Ascending aorta (tissue), 2 donors: ENCODE measurements at regions of chr15 and their contacts with region 1.

Region 1: GRCh38 chr15:83653639-83654378 is at the start of gene ADAMTSL3:
- DNase-seq: peak in 1 of 2 donors; percentile 88
- H3K4me3 ChIP-seq: peak within 1 kb of the TSS; percentile 71 to 74
- H3K27ac ChIP-seq: peak within 1 kb of the TSS; percentile 89 to 91
- H3K4me1 ChIP-seq: peaks cover 9 to 28% of the 10 kb centered on the region in 2 donors
- H3K27me3 ChIP-seq: no peaks in the 10 kb centered on the region
- CTCF ChIP-seq: peak in 2 of 3 experiments; percentile 8 to 27
- total RNA-seq, gene ADAMTSL3: 28.1 TPM

Region 2: DNA sequence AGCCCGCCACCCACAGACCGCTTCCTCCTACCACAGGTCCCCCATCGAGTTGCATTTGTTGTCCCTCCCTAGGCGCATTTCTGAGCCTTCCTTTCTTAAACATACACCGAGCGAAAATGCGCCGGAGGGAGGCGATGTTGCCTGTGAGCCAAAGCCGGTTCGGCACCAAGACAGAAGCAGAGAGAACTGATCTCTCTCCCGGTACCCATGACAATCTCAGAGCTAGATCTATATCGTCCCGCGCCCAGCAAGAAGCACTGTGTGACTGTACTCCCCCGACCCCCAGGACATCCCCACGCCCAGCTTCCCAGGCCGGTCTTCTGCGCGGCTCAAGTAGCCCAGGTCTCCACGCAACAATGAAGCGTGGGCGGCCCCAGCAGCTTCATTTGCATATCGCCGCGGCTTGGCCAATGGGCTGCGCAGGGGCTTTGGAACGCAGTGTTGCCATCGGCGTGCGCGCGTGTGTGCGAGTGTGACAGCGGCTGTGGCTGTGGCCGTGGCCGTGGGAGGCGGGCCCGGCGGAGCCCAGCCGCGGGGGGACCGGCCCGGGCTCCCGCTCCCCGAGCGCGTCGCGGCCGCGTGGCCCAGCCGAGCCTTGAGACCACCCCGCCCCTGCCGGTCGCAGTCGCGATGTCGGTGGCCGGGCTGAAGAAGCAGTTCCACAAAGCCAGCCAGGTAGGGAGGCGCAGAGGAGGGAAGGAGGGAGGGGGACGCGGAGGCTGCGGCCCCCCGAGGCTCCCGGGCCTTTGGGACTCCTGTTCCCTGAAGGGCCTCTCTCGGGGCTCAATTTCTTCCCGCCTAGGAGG is 206.7 kb before region 1 on chr15 and contains the start of gene SH3GL3:
- intact Hi-C with region 1: loop called (anchors 5 kb)
- DNase-seq: peak; percentile 47 to 90
- H3K4me3 ChIP-seq: peak within 1 kb of the TSS; percentile 70 to 84
- H3K27ac ChIP-seq: no peak within 1 kb of the TSS
- H3K4me1 ChIP-seq: peaks cover 0 to 2% of the 10 kb centered on the region in 2 donors
- H3K27me3 ChIP-seq: no peaks in the 10 kb centered on the region
- CTCF ChIP-seq: peak in 2 of 3 experiments; percentile 42 to 47
- total RNA-seq, gene SH3GL3: not detected

Region 3: DNA sequence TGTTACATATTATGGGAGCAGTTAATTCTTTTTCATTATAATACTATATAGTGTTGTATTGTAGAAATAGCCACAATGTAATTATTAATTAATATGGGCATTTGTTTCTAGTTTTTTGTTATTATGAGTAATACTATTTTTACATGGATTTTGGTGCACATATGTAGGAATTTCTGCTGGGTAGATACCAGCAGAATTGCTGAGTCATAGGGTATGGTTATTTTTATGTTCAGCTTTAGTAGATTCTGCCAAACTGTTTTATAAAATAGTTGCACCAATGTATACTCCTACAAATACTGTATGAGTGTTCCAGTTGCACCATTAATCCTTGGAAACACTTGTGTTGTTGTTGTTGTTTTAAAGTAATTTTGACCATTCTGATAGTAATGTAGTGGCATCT is 115.1 kb before region 1 on chr15:
- intact Hi-C with region 1: no loop called
- DNase-seq: no peak
- H3K4me3 ChIP-seq: no peak overlapping the region
- H3K27ac ChIP-seq: no peak overlapping the region
- H3K4me1 ChIP-seq: no peaks in the 10 kb centered on the region
- H3K27me3 ChIP-seq: no peaks in the 10 kb centered on the region
- CTCF ChIP-seq: no peak

Region 4: DNA sequence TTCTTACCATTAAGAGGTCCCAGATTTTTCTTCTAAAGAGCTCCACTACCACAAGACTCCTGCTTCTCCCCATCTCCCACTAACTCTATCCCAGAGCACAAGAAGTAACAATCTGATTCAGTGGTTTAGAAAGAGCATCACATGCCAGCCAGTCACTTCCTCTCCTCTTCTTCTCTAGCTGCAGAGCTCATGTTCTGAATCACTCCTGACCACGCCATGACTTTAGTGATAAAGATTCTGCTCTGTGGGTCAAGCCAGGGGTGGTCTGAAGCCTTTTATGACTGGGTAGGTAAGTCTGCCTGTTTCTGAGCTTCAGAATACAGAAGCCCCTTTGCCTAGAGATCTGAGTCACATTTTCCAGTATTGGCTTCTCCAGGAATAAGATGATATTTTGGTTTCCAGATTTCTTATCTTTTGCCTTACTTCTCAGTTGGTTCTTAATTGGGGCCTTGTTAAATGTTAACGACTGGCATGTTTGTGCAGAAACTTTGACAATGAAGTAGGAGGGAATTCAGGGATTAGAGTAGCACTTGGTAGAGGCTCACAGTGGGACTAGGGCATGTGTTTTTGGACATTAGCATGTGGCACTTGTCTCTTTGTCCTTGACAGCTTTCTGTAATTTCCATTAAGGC is 27.5 kb before region 1 on chr15:
- intact Hi-C with region 1: no loop called
- DNase-seq: no peak
- H3K4me3 ChIP-seq: no peak overlapping the region
- H3K27ac ChIP-seq: no peak overlapping the region
- H3K4me1 ChIP-seq: no peaks in the 10 kb centered on the region
- H3K27me3 ChIP-seq: no peaks in the 10 kb centered on the region
- CTCF ChIP-seq: no peak

Region 5: GRCh38 chr15:83692746-83693581 is 39.2 kb after region 1 on chr15:
- intact Hi-C with region 1: loop called (anchors 2 kb)
- DNase-seq: no peak
- H3K4me3 ChIP-seq: peak overlapping the region; percentile 19 to 37
- H3K27ac ChIP-seq: peak overlapping the region; percentile 67 to 86
- H3K4me1 ChIP-seq: peaks cover 18 to 37% of the 10 kb centered on the region in 2 donors
- H3K27me3 ChIP-seq: no peaks in the 10 kb centered on the region
- CTCF ChIP-seq: no peak

Region 6: GRCh38 chr15:83747050-83747717 is 93.4 kb after region 1 on chr15:
- intact Hi-C with region 1: loop called (anchors 2 kb)
- DNase-seq: no peak
- H3K4me3 ChIP-seq: peak overlapping the region; percentile 28 to 58
- H3K27ac ChIP-seq: peak overlapping the region; percentile 69 to 78
- H3K4me1 ChIP-seq: peaks cover 0 to 2% of the 10 kb centered on the region in 2 donors
- H3K27me3 ChIP-seq: no peaks in the 10 kb centered on the region
- CTCF ChIP-seq: peak; percentile 33 to 62 (median 41)

Region 7: DNA sequence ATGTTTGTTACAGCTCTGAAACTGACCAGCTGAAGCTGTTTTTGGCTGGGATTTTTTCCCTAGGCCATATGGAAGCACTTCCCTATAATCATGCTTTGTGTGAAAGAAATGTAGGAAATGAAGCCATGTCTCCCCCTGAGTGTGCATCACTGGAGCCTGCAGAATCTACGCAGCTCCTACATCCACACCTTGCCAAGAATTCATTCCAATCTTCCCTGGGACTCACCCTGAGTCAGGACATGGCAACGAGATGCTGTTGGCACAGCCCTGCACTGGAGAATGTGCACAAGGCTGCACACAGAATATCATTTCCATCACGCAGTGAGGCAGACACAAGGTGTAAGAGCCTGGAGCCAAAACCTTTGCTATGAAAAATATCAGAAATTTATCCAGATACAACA is 189.7 kb after region 1 on chr15:
- intact Hi-C with region 1: loop called (anchors 5 kb)
- DNase-seq: peak in 1 of 2 donors; percentile 73
- H3K4me3 ChIP-seq: no peak overlapping the region
- H3K27ac ChIP-seq: peak overlapping the region in 1 of 2 donors; percentile 3
- H3K4me1 ChIP-seq: peaks cover 0 to 9% of the 10 kb centered on the region in 2 donors
- H3K27me3 ChIP-seq: no peaks in the 10 kb centered on the region
- CTCF ChIP-seq: no peak